Activated CD4-positive, alpha-beta T cell treated with anti-CD3 and anti-CD28 coated beads, Interleukin-2, amount 10 ng/mL, durations not matched to agents 24 days and 14 days (primary cell): ENCODE measurements at regions of chr10 and their contacts with region 1.

Region 1: GRCh38 chr10:94607111-94607510 is 61.5 kb downstream of the HELLS start:
- DNase-seq: peak; percentile 46
- H3K4me3 Mint-ChIP-seq: no peak overlapping the region
- H3K27ac Mint-ChIP-seq: peak overlapping the region; percentile 88
- H3K4me1 Mint-ChIP-seq: peaks cover 21% of the 10 kb centered on the region
- H3K27me3 Mint-ChIP-seq: no peaks in the 10 kb centered on the region

Region 2: GRCh38 chr10:94571528-94571927 is 35.6 kb before region 1 on chr10:
- intact Hi-C with region 1: no loop called
- DNase-seq: no peak
- H3K4me3 Mint-ChIP-seq: no peak overlapping the region
- H3K27ac Mint-ChIP-seq: no peak overlapping the region
- H3K4me1 Mint-ChIP-seq: peaks cover 2% of the 10 kb centered on the region
- H3K27me3 Mint-ChIP-seq: no peaks in the 10 kb centered on the region

Region 3: GRCh38 chr10:94591461-94592205 is 15.5 kb before region 1 on chr10:
- intact Hi-C with region 1: loop called (anchors 1 kb)
- DNase-seq: no peak
- H3K4me3 Mint-ChIP-seq: peak overlapping the region; percentile 45
- H3K27ac Mint-ChIP-seq: peak overlapping the region; percentile 83
- H3K4me1 Mint-ChIP-seq: peaks cover 16% of the 10 kb centered on the region
- H3K27me3 Mint-ChIP-seq: no peaks in the 10 kb centered on the region

Region 4: GRCh38 chr10:94623572-94623971 is 16.5 kb after region 1 on chr10:
- intact Hi-C with region 1: no loop called
- DNase-seq: no peak
- H3K4me3 Mint-ChIP-seq: no peak overlapping the region
- H3K27ac Mint-ChIP-seq: no peak overlapping the region
- H3K4me1 Mint-ChIP-seq: no peaks in the 10 kb centered on the region
- H3K27me3 Mint-ChIP-seq: peaks cover 3% of the 10 kb centered on the region

Region 5: GRCh38 chr10:95236068-95236903 is 629.2 kb after region 1 on chr10:
- intact Hi-C with region 1: loop called (anchors 1 kb)
- DNase-seq: no peak
- H3K4me3 Mint-ChIP-seq: peak overlapping the region; percentile 50
- H3K27ac Mint-ChIP-seq: peak overlapping the region; percentile 83
- H3K4me1 Mint-ChIP-seq: peaks cover 25% of the 10 kb centered on the region
- H3K27me3 Mint-ChIP-seq: peaks cover 3% of the 10 kb centered on the region